HEK293 (cell line): ENCODE measurements at regions of chrX and their contacts with region 1.

Region 1: DNA sequence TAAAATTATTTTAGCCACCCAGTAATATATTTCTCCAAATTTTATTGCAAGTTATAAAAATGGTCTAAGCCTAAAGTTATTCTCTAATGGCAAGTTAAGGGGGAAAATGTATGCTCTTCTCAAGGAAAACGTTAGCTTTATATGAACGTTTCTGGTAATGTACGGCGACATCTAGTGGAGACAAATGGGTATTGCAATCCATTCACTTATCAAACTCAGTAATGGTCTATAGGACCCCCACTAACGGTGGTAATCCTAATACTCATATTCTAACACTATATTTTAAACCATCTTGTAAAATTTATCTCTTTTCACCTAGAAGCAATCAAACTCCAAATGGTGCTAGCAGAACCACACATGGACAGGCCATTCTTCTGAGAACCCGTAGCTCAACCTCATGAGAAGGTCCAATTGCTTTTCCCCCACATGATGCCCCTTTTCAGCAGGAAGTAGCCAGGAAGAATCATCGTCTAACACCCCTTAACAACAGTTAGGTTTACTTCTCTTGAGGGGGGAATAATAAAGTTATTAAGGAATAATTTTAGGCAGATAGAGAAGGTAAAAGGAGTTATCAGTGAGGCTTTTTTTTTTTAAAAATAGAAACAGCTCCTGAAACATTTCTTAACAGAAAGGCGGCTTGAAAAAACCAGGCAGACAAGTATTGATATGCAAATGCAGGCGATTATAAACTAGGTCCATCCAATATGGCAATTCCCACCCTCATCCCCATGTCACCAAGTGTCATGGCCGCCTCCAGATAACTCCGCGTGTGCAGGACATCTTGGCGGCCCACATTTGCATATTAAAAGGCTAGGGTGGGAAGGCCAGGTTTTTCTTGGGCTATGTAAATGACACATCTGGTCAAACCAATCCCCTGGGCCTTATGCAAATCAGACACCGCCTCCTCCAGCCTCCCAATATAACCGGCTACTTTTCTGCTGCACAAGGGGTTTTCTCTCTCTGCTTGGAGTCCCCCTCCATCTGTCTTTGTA is 35.0 kb downstream of the NUDT11 start:
- H3K4me3 ChIP-seq: no peak overlapping the region
- H3K27ac ChIP-seq: no peak overlapping the region
- H3K4me1 ChIP-seq: no peaks in the 10 kb centered on the region
- CTCF ChIP-seq: no peak

Region 2: GRCh38 chrX:51148848-51149247 is 312.5 kb before region 1 on chrX:
- CTCF ChIA-PET with region 1: interaction called, 11 read pairs
- POLR2A ChIA-PET with region 1: no interaction called
- H3K4me3 ChIP-seq: no peak overlapping the region
- H3K27ac ChIP-seq: no peak overlapping the region
- H3K4me1 ChIP-seq: no peaks in the 10 kb centered on the region
- CTCF ChIP-seq: no peak

Region 3: GRCh38 chrX:51336584-51336983 is 124.8 kb before region 1 on chrX:
- CTCF ChIA-PET with region 1: interaction called, 32 read pairs
- POLR2A ChIA-PET with region 1: no interaction called
- H3K4me3 ChIP-seq: no peak overlapping the region
- H3K27ac ChIP-seq: no peak overlapping the region
- H3K4me1 ChIP-seq: no peaks in the 10 kb centered on the region
- CTCF ChIP-seq: no peak

Region 4: DNA sequence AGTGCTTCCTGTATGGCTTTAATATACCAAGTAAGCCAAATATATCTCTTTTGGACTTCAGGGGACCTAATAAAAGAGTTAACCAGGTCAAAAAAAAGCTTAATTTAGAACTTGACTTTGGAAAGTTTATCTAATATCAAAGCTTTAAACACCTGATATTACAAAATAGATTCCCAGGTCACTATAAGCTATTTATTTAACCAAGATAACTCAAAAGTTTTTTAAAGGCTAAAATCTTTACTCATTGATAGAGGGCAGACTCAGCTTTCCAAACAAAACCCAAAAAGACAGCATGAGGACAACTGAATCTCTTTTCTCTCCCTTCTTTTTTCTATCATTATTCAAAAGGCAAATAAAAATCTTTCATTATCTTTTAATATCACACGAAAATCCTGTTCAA is 15.6 kb after region 1 on chrX:
- CTCF ChIA-PET with region 1: interaction called, 28 read pairs
- POLR2A ChIA-PET with region 1: no interaction called
- H3K4me3 ChIP-seq: no peak overlapping the region
- H3K27ac ChIP-seq: no peak overlapping the region
- H3K4me1 ChIP-seq: no peaks in the 10 kb centered on the region
- CTCF ChIP-seq: no peak